PC-9 (cell line): ENCODE measurements at regions of chr14 and their contacts with region 1.

Region 1: DNA sequence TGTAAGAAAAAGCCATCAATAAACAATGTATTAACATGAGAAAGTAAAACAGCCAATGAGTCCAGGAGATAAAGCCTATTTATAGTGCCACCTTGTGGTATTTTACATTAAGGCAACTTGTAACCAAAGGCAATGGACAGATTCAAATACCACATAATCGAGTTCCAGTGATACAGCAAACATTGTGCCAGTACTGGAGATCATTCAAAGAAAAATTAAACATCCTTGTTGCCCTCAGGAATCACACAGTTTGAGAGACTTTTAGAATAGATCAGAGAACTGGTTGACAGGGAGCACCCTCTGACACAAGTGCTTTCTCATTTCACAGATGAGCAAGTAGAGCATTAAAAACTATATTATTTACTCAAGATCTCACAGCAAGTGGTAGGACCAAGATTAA is 98.1 kb downstream of the DDHD1 start:
- DNase-seq: no peak
- H3K4me3 ChIP-seq: no peak overlapping the region
- H3K27ac ChIP-seq: no peak overlapping the region
- H3K4me1 ChIP-seq: no peaks in the 10 kb centered on the region
- H3K27me3 ChIP-seq: no peaks in the 10 kb centered on the region
- CTCF ChIP-seq: peak; percentile 75

Region 2: GRCh38 chr14:52824507-52824906 is 230.5 kb before region 1 on chr14:
- CTCF ChIA-PET with region 1: no interaction called
- POLR2A ChIA-PET with region 1: no interaction called
- intact Hi-C with region 1: loop called (anchors 1 kb)
- DNase-seq: no peak
- H3K4me3 ChIP-seq: no peak overlapping the region
- H3K27ac ChIP-seq: no peak overlapping the region
- H3K4me1 ChIP-seq: no peaks in the 10 kb centered on the region
- H3K27me3 ChIP-seq: no peaks in the 10 kb centered on the region
- CTCF ChIP-seq: no peak

Region 3: DNA sequence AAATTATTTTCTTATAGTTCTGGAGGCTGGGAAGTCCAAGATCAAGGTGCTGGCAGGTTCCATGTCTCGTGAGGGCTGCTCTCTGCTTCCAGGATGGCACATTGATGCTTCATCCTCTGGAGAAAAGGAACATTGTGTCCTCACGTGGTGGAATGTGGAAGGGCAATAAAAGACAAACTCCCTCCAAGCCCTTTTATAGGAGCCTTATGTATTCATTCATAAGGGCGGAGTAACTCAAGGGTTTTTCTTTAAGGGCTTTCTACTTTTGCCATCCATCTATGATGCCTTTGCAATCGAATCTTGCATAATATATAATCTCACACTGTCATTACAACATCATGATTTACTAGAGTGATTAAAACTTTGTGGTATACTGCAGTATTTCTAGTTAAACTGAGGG is 230.8 kb after region 1 on chr14:
- CTCF ChIA-PET with region 1: no interaction called
- POLR2A ChIA-PET with region 1: no interaction called
- intact Hi-C with region 1: loop called (anchors 10 kb)
- DNase-seq: no peak
- H3K4me3 ChIP-seq: no peak overlapping the region
- H3K27ac ChIP-seq: no peak overlapping the region
- H3K4me1 ChIP-seq: no peaks in the 10 kb centered on the region
- H3K27me3 ChIP-seq: no peaks in the 10 kb centered on the region
- CTCF ChIP-seq: no peak